GM12878 (cell line): ENCODE measurements at regions of chr20 and their contacts with region 1.

Region 1: DNA sequence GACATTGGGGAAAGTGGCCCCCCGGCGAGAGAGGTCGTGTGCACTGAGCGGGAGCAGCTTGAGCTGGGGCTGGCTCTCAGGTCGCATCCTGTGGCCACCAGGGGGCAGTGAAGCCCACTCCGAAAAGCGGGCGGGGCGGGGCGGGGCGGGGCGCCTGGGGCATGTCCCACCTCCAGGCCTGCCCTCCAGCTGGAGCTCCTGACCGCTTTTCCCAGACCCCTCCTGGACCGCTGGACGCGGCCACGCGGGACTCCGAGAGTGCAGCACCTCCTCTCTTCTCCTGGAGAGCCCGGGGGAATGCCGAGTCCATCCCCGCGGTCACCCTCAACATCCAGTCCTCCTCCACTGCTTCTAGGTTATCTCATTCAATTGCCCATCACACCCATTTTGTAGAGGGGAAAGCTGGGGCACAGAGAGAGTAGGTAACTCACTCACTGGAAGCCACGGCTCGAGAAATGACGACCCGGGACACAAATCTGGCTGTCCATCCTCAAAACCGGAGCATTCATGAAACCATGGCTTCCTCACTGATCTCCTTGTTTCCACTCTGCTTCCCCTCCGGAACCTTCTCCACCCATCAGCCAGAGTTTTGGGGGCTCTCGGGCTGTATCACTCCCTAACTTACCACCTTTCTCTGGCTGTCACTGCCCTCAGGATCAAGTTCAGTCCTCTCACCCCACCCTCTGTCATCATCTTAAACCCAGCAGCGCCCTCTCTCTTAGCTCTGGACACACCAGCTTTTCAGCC is 24.1 kb downstream of the COX4I2 start:
- DNase-seq: no peak
- ATAC-seq: peak; percentile 96
- H3K4me3 ChIP-seq: peak overlapping the region; percentile 65; the same call in 1 of the 2 replicates
- H3K27ac ChIP-seq: peak overlapping the region; percentile 42; the same call in 1 of the 2 replicates
- H3K4me1 ChIP-seq: peaks cover 3% of the 10 kb centered on the region; the same call in 1 of the 2 replicates
- H3K27me3 ChIP-seq: no peaks in the 10 kb centered on the region
- CTCF ChIP-seq: peak; percentile 61 to 82 (median 76)
- EP300 ChIP-seq: no peak
- POLR2A ChIP-seq: no peak
- RAD21 ChIP-seq: peak; percentile 77

Region 2: DNA sequence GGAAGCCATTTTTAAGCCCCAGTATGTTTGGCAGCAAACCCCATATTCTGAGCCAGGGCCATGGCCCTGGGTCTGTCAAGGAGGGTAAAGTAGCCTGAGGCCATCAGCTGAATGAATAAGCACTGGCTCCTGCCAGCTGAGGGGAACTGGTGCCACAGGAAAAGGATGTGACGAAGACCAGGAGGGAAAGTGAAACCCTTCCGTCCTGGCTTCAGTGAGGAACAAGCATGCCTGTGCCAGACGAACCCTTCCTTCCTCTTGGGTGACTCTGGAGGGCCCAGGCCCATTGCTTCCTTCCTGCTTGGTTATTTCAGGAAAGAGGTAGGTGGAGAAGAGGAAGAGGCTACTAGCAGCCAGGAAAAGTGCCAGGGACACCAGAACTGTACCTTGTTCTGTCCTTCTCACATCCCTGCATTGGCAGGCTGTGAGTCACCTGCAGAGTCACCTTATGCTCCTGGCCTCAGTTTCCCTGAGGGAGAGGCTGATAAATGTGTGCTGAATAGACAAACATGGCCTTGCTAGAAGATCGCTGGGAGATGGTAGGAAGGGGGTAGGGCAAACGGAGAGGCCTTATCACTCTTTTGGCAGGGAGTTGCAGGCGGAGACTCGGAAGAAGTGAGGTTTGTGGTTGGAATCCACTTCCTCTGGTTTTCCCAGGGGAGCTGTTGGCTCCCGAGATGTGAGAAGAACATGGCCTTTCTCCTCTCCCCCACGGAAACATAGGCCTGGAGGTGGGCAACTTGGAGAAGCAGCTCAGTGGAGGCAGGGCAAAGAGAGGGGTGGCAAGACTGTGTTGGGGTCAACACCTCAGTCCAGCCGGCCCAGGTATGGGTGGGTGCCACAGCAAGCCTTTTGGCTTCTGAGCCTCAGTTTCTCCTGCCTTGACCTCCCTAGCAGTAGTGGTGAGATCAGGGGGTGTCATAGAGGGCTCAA is 13.4 kb after region 1 on chr20:
- CTCF ChIA-PET with region 1: interaction called, 66 read pairs
- POLR2A ChIA-PET with region 1: interaction called, 23 read pairs
- RAD21 ChIA-PET with region 1: interaction called, 48 read pairs
- SMC1A ChIA-PET with region 1: interaction called, 60 read pairs
- in situ Hi-C with region 1: no loop called
- intact Hi-C with region 1: no loop called
- DNase-seq: no peak
- ATAC-seq: peak; percentile 89
- H3K4me3 ChIP-seq: peak overlapping the region; percentile 68
- H3K27ac ChIP-seq: peak overlapping the region; percentile 91
- H3K4me1 ChIP-seq: peaks cover 30% of the 10 kb centered on the region
- H3K27me3 ChIP-seq: no peaks in the 10 kb centered on the region
- CTCF ChIP-seq: no peak
- EP300 ChIP-seq: no peak
- POLR2A ChIP-seq: peak; percentile 63
- RAD21 ChIP-seq: no peak

Region 3: DNA sequence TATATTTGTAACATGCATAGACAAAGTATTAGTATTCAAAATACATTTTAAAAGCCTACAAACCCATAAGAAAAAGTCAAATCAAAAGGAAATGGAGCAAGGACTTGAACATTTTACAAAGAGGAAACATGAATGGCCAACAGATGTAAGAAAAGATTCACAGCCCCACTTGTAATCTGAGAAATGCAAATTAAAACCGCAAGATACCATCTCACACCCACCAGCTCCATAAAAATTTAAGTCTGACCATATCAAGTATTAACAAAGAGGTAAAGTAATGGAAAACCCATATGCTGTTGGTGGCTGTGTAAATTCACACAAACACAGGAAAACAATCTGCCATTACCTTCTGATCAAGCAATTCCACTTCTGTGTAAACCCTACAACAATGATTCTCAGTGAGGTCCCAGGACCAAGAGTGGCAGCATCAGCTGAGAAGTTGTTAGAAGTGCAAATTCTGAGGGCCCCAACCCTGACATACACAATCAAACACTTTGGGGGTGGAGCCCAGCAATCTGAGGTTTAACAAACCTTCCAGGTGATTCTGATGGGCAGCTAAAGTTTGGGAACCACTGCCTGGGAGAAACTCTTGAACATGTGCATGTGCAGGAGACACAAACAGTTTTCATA is 30.0 kb after region 1 on chr20:
- CTCF ChIA-PET with region 1: interaction called, 52 read pairs
- POLR2A ChIA-PET with region 1: interaction called, 4 read pairs
- RAD21 ChIA-PET with region 1: interaction called, 18 read pairs
- SMC1A ChIA-PET with region 1: interaction called, 32 read pairs
- in situ Hi-C with region 1: no loop called
- intact Hi-C with region 1: no loop called
- DNase-seq: no peak
- ATAC-seq: peak; percentile 78
- H3K4me3 ChIP-seq: no peak overlapping the region
- H3K27ac ChIP-seq: peak overlapping the region; percentile 63
- H3K4me1 ChIP-seq: peaks cover 15% of the 10 kb centered on the region
- H3K27me3 ChIP-seq: no peaks in the 10 kb centered on the region
- CTCF ChIP-seq: no peak
- EP300 ChIP-seq: no peak
- POLR2A ChIP-seq: no peak
- RAD21 ChIP-seq: no peak

Region 4: GRCh38 chr20:31712564-31713311 is 50.9 kb after region 1 on chr20:
- CTCF ChIA-PET with region 1: interaction called, 531 read pairs
- POLR2A ChIA-PET with region 1: interaction called, 20 read pairs
- RAD21 ChIA-PET with region 1: interaction called, 428 read pairs
- SMC1A ChIA-PET with region 1: interaction called, 321 read pairs
- in situ Hi-C with region 1: no loop called
- intact Hi-C with region 1: no loop called
- DNase-seq: no peak
- ATAC-seq: no peak
- H3K4me3 ChIP-seq: no peak overlapping the region
- H3K27ac ChIP-seq: no peak overlapping the region
- H3K4me1 ChIP-seq: peaks cover 28% of the 10 kb centered on the region
- H3K27me3 ChIP-seq: no peaks in the 10 kb centered on the region
- CTCF ChIP-seq: no peak
- EP300 ChIP-seq: no peak
- POLR2A ChIP-seq: no peak
- RAD21 ChIP-seq: no peak

Region 5: GRCh38 chr20:31967830-31968249 is 306.0 kb after region 1 on chr20 and contains the start of gene XKR7:
- CTCF ChIA-PET with region 1: no interaction called
- POLR2A ChIA-PET with region 1: no interaction called
- RAD21 ChIA-PET with region 1: no interaction called
- SMC1A ChIA-PET with region 1: no interaction called
- in situ Hi-C with region 1: no loop called
- intact Hi-C with region 1: no loop called
- DNase-seq: no peak
- ATAC-seq: no peak
- H3K4me3 ChIP-seq: no peak within 1 kb of the TSS
- H3K27ac ChIP-seq: no peak within 1 kb of the TSS
- H3K4me1 ChIP-seq: no peaks in the 10 kb centered on the region
- H3K27me3 ChIP-seq: peaks cover 0 to 2% of the 10 kb centered on the region in 2 experiments; a peak in 3 of 4 replicates
- CTCF ChIP-seq: no peak
- EP300 ChIP-seq: no peak
- POLR2A ChIP-seq: no peak
- RAD21 ChIP-seq: no peak
- polyA plus RNA-seq, gene XKR7: not detected